ENCODE measurements at regions of chr7 and their contacts with region 1.

Region 1: GRCh38 chr7:100435401-100436304 is 644 bp downstream of the PPP1R35 start:
- DNase-seq: peak in 7 of 9 donors; percentile 44 to 57 (median 55)
- ATAC-seq: peak; percentile 26
- H3K4me3 ChIP-seq: peak overlapping the region; percentile 89
- H3K4me3 Mint-ChIP-seq: peak overlapping the region; percentile 86 to 100 (median 95)
- H3K27ac ChIP-seq: peak overlapping the region; percentile 98
- H3K27ac Mint-ChIP-seq: peak overlapping the region; percentile 88 to 99 (median 97)
- H3K4me1 ChIP-seq: peaks cover 22 to 36% of the 10 kb centered on the region in 2 donors
- H3K4me1 Mint-ChIP-seq: peaks cover 30 to 52% (median 43%) of the 10 kb centered on the region in 7 donors
- H3K27me3 ChIP-seq: no peaks in the 10 kb centered on the region
- H3K27me3 Mint-ChIP-seq: peaks cover 0 to 4% (median 0%) of the 10 kb centered on the region in 5 donors

Region 2: GRCh38 chr7:99244939-99245338 is 1190.7 kb before region 1 on chr7:
- CTCF ChIA-PET with region 1: no interaction called
- POLR2A ChIA-PET with region 1: no interaction called
- intact Hi-C with region 1: no loop called
- DNase-seq: no peak
- ATAC-seq: no peak
- H3K4me3 ChIP-seq: no peak overlapping the region
- H3K4me3 Mint-ChIP-seq: no peak overlapping the region
- H3K27ac ChIP-seq: no peak overlapping the region
- H3K27ac Mint-ChIP-seq: no peak overlapping the region
- H3K4me1 ChIP-seq: no peaks in the 10 kb centered on the region
- H3K4me1 Mint-ChIP-seq: peaks cover 0 to 2% (median 0%) of the 10 kb centered on the region in 7 donors
- H3K27me3 ChIP-seq: no peaks in the 10 kb centered on the region
- H3K27me3 Mint-ChIP-seq: peaks cover 0 to 16% (median 10%) of the 10 kb centered on the region in 5 donors

Region 3: GRCh38 chr7:100456558-100456957 is 20.9 kb after region 1 on chr7:
- CTCF ChIA-PET with region 1: no interaction called
- POLR2A ChIA-PET with region 1: interaction called, 71 read pairs
- intact Hi-C with region 1: no loop called
- DNase-seq: no peak
- ATAC-seq: no peak
- H3K4me3 ChIP-seq: no peak overlapping the region
- H3K4me3 Mint-ChIP-seq: no peak overlapping the region
- H3K27ac ChIP-seq: no peak overlapping the region
- H3K27ac Mint-ChIP-seq: peak overlapping the region in 2 of 9 donors; percentile 43 to 67
- H3K4me1 ChIP-seq: peaks cover 0 to 8% of the 10 kb centered on the region in 2 donors
- H3K4me1 Mint-ChIP-seq: peaks cover 7 to 20% (median 13%) of the 10 kb centered on the region in 7 donors
- H3K27me3 ChIP-seq: no peaks in the 10 kb centered on the region
- H3K27me3 Mint-ChIP-seq: no peaks in the 10 kb centered on the region